Caco-2 (cell line): ENCODE measurements at regions of chr18 and their contacts with region 1.

Region 1: GRCh38 chr18:24168501-24168900 is 29.6 kb downstream of the CABYR start:
- DNase-seq: no peak
- H3K4me3 ChIP-seq: no peak overlapping the region
- H3K4me3 Mint-ChIP-seq: no peak overlapping the region
- H3K27ac Mint-ChIP-seq: no peak overlapping the region
- H3K4me1 ChIP-seq: no peaks in the 10 kb centered on the region
- H3K4me1 Mint-ChIP-seq: no peaks in the 10 kb centered on the region
- H3K27me3 ChIP-seq: no peaks in the 10 kb centered on the region
- H3K27me3 Mint-ChIP-seq: no peaks in the 10 kb centered on the region
- CTCF ChIP-seq: no peak

Region 2: DNA sequence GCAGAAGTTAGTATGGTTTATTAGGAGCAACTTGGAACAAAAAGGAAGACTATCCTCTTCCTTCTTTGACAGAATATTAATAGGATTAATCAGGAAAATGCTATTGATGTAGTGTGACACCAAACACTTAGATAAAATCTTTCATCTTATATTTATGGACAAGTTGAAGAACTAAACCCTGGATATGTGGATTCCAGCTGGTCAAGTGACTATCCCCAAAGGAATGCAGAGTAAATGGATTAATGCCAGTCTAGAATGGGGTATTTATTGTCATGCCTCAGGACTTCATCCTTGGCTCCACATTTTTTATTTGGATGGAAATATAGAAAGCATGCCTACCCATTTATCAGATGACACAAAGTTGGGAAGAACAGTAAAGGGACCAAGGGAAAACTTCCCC is 277.9 kb before region 1 on chr18:
- CTCF ChIA-PET with region 1: no interaction called
- POLR2A ChIA-PET with region 1: no interaction called
- intact Hi-C with region 1: no loop called
- DNase-seq: no peak
- H3K4me3 ChIP-seq: no peak overlapping the region
- H3K4me3 Mint-ChIP-seq: no peak overlapping the region
- H3K27ac Mint-ChIP-seq: no peak overlapping the region
- H3K4me1 ChIP-seq: no peaks in the 10 kb centered on the region
- H3K4me1 Mint-ChIP-seq: no peaks in the 10 kb centered on the region
- H3K27me3 ChIP-seq: no peaks in the 10 kb centered on the region
- H3K27me3 Mint-ChIP-seq: no peaks in the 10 kb centered on the region
- CTCF ChIP-seq: no peak

Region 3: DNA sequence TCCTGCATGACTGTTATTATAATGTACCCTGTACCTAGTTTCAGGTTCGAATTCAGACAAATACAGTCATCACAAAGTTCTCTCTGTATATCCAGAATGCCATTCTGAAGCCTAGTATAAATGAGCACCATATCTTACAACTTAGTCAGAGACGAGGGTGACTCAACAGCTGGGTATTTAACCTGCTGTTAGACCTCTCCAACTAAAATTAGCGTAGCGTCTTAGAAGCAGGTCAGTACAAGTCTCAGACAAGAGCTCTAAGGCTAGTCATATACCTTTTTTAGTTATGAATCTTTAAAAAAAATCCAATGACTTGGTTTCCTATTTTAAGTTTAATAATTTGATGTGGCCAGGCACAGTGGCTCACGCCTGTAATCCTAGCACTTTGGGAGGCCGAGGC is 44.4 kb after region 1 on chr18:
- CTCF ChIA-PET with region 1: no interaction called
- POLR2A ChIA-PET with region 1: no interaction called
- intact Hi-C with region 1: loop called (anchors 2 kb)
- DNase-seq: no peak
- H3K4me3 ChIP-seq: no peak overlapping the region
- H3K4me3 Mint-ChIP-seq: no peak overlapping the region
- H3K27ac Mint-ChIP-seq: no peak overlapping the region
- H3K4me1 ChIP-seq: no peaks in the 10 kb centered on the region
- H3K4me1 Mint-ChIP-seq: peaks cover 5% of the 10 kb centered on the region
- H3K27me3 ChIP-seq: no peaks in the 10 kb centered on the region
- H3K27me3 Mint-ChIP-seq: no peaks in the 10 kb centered on the region
- CTCF ChIP-seq: no peak